Mammary epithelial cell (primary cell): ENCODE measurements at regions of chr15 and their contacts with region 1.

Region 1: DNA sequence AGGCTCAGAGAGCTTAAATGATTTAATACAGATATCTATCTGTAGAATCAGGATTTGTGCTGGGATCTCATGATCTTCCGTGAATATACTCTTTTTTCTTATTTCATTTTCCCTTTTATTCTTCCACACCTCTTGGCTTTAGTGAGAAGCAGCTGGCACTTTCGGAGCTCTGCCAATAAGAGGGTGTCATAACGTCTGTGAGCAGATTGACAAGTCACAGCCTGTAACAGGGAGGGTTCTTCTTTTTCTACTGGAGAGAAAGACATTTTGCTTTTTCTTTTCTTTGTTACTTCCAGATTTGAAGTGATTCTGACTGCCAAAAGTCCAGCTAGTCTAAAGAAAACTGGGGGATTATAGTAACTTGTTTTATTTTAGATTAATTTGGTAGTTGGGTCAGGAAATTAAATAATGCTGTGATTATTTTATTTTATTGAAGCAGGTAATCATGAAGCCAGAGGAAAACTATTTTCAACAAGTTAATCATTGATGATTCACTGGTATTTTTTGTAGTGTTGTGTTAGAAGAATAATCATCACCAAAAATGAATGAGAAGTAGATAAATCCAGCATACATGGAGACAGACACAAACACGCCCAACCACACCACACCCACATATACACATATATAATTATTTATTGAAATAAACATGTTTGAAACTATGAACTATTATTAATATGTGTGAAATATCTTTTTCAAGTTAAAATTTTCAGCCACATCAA is 69.8 kb downstream of the TNFAIP8L3 start:
- DNase-seq: peak; percentile 91
- H3K4me3 ChIP-seq: peak overlapping the region; percentile 24 to 43 (median 29)
- H3K27ac ChIP-seq: peak overlapping the region; percentile 99
- H3K4me1 ChIP-seq: peaks cover 20% of the 10 kb centered on the region
- H3K27me3 ChIP-seq: no peaks in the 10 kb centered on the region
- CTCF ChIP-seq: no peak

Region 2: DNA sequence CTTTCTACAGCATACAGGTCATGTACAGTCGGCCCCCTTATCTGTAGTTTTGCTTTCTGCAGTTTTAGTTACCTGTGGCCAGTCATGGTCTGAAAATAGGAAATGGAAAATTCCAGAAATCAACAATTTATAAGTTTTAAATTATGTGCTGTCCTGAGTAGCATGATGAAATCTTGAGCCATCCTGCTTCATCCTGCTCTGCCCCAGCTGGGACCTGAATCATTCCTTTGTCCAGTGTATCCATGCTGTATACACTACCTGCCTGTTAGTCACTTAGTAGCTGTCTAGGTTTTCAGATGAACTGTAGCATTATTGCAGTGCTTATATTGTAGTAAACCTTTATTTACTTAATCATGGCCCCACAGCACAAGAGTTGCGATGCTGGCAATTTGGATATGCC is 71.6 kb before region 1 on chr15:
- CTCF ChIA-PET with region 1: no interaction called
- dilution Hi-C with region 1: no loop called
- in situ Hi-C with region 1: no loop called
- intact Hi-C with region 1: no loop called
- DNase-seq: peak; percentile 83
- H3K4me3 ChIP-seq: no peak overlapping the region
- H3K27ac ChIP-seq: peak overlapping the region; percentile 50
- H3K4me1 ChIP-seq: peaks cover 9% of the 10 kb centered on the region
- H3K27me3 ChIP-seq: no peaks in the 10 kb centered on the region
- CTCF ChIP-seq: no peak

Region 3: GRCh38 chr15:51080286-51080685 is 55.4 kb after region 1 on chr15:
- CTCF ChIA-PET with region 1: interaction called, 6 read pairs
- dilution Hi-C with region 1: no loop called
- in situ Hi-C with region 1: no loop called
- intact Hi-C with region 1: loop called (anchors 2 kb)
- DNase-seq: peak; percentile 62
- H3K4me3 ChIP-seq: no peak overlapping the region
- H3K27ac ChIP-seq: peak overlapping the region; percentile 15
- H3K4me1 ChIP-seq: peaks cover 20% of the 10 kb centered on the region
- H3K27me3 ChIP-seq: no peaks in the 10 kb centered on the region
- CTCF ChIP-seq: no peak

Region 4: GRCh38 chr15:51366960-51367648 is 342.2 kb after region 1 on chr15:
- CTCF ChIA-PET with region 1: no interaction called
- dilution Hi-C with region 1: no loop called
- in situ Hi-C with region 1: no loop called
- intact Hi-C with region 1: no loop called
- DNase-seq: peak; percentile 22
- H3K4me3 ChIP-seq: no peak overlapping the region
- H3K27ac ChIP-seq: no peak overlapping the region
- H3K4me1 ChIP-seq: no peaks in the 10 kb centered on the region
- H3K27me3 ChIP-seq: no peaks in the 10 kb centered on the region
- CTCF ChIP-seq: peak in 1 of 2 donors; percentile 2